ENCODE measurements at regions of chr10 and their contacts with region 1.

Region 1: GRCh38 chr10:63866075-63866746 is 345.0 kb downstream of the REEP3 start:
- DNase-seq: peak in 7 of 9 donors; percentile 17 to 37 (median 20)
- ATAC-seq: peak; percentile 81
- H3K4me3 ChIP-seq: no peak overlapping the region
- H3K4me3 Mint-ChIP-seq: peak overlapping the region in 7 of 10 donors; percentile 17 to 40 (median 25)
- H3K27ac ChIP-seq: no peak overlapping the region
- H3K27ac Mint-ChIP-seq: no peak overlapping the region
- H3K4me1 ChIP-seq: peaks cover 4 to 6% of the 10 kb centered on the region in 2 donors
- H3K4me1 Mint-ChIP-seq: peaks cover 0 to 13% (median 6%) of the 10 kb centered on the region in 7 donors
- H3K27me3 ChIP-seq: peaks cover 0 to 6% of the 10 kb centered on the region in 2 donors
- H3K27me3 Mint-ChIP-seq: peaks cover 26 to 47% (median 43%) of the 10 kb centered on the region in 5 donors

Region 2: GRCh38 chr10:63166742-63167258 is 699.4 kb before region 1 on chr10:
- CTCF ChIA-PET with region 1: interaction called, 4 read pairs
- POLR2A ChIA-PET with region 1: no interaction called
- intact Hi-C with region 1: loop called in 1 of 2 experiments (anchors 10 kb)
- DNase-seq: peak in 7 of 9 donors; percentile 36 to 65 (median 55)
- ATAC-seq: peak; percentile 79
- H3K4me3 ChIP-seq: no peak overlapping the region
- H3K4me3 Mint-ChIP-seq: no peak overlapping the region
- H3K27ac ChIP-seq: no peak overlapping the region
- H3K27ac Mint-ChIP-seq: peak overlapping the region in 6 of 9 donors; percentile 24 to 59 (median 46)
- H3K4me1 ChIP-seq: no peaks in the 10 kb centered on the region
- H3K4me1 Mint-ChIP-seq: peaks cover under 1 to 42% (median 2%) of the 10 kb centered on the region in 7 donors
- H3K27me3 ChIP-seq: no peaks in the 10 kb centered on the region
- H3K27me3 Mint-ChIP-seq: no peaks in the 10 kb centered on the region

Region 3: DNA sequence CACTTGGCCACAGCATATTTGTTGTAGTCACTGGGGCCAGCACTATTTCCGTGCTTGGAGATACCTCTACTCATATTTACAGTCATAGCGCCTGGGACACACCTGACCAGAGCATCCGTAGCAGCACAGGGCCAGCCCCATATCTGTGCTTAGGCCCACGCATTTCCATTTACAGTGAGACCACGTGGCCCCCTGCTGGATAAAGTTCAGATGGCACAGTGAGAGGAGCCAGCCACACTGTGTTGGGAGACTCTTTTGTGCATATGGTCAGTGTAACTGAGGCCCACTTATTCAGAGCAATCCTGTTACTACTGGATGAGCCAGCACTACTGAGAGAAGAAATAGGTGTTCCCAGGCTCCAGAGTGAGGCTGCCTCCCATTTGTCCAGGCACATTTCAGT is 110.3 kb after region 1 on chr10:
- CTCF ChIA-PET with region 1: no interaction called
- POLR2A ChIA-PET with region 1: no interaction called
- intact Hi-C with region 1: loop called (anchors 1 to 2 kb)
- DNase-seq: peak in 2 of 9 donors; percentile 2 to 26
- ATAC-seq: peak; percentile 43
- H3K4me3 ChIP-seq: no peak overlapping the region
- H3K4me3 Mint-ChIP-seq: no peak overlapping the region
- H3K27ac ChIP-seq: no peak overlapping the region
- H3K27ac Mint-ChIP-seq: no peak overlapping the region
- H3K4me1 ChIP-seq: no peaks in the 10 kb centered on the region
- H3K4me1 Mint-ChIP-seq: peaks cover 0 to 1% (median 0%) of the 10 kb centered on the region in 7 donors
- H3K27me3 ChIP-seq: no peaks in the 10 kb centered on the region
- H3K27me3 Mint-ChIP-seq: peaks cover 0 to 5% (median 0%) of the 10 kb centered on the region in 5 donors